Left colon (tissue), 2 donors: ENCODE measurements at regions of chr6 and their contacts with region 1.

Region 1: DNA sequence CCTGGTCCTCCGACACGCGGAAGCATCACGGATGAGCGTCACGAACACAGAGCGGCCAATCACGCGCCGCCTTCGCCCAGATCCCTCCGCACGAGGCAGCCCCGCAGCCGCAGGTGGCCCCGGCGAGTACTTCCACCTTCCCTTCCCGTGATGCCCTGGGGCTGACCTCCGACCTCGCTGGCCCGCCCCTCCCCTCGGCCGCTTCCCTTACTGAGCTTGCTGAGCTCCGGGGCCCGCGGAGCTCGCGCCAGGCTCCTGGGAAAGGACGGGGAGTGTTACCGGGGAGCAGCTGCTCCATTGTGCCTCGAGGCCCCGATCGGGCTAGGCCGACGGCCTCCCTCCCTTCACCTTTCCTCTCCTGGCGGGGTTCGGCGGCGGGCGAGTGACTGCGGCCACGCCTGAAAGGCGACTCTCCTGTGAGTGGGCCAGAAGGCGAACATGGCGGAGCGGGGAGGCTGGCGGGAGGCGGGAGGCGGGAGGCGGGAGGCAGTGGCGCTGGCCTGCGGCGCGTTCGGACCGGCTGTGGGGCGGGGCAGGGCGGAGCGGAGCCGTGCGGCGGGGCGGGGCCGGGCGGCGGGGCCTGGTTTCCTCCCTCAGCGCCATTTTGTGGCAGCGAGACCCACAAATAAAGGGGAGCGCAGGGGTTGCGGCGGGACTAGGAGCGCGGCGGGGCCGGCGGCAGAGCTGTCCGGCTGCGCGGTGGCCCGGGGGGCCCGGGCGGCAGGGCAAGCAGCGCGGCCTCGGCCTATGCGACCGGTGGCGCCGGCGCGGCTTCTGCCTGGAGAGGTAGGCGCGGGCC is at the start of gene WTAP:
- DNase-seq: peak; percentile 97 to 98
- ATAC-seq: peak; percentile 91
- total RNA-seq, gene WTAP: 73.4 to 79.3 TPM

Region 2: DNA sequence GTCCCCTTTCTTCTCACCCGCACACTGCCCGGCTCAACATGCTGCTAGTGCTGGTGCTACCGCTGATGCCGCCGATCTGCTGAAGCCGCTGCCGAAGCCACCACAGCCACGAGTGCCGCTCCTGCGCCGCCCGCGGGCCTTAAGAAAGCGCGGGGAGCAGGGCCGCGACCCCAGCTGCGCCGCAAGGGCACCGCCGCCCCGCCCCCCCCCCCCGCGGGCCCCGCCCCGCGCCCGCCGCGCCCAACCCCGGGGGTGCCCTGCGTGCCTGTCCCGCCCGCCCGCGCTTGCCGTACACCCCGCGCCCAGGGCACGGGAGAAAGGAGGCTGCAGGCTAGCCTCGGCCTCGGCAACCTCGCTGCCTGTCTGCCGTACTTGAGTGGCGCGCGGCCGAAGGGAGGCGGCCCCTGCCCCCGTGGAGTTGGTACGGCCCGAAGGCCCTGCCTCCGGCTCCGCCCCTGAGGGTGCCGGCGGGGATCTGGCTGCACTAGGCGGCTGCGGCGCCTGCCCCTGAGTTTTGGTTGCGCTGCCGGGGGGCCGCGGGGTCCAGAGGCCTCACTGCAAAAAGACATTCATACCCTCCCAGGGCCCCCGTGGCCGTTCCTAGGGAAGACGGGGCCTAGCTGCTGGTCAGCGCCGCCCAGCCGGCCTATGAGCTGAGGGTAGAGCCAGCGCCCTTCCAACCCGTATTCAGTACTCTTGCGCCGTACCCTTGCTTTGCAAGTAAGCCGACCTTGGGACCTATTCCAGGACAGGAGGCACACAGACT is 33.8 kb before region 1 on chr6 and contains the start of gene SOD2:
- intact Hi-C with region 1: loop called in 1 of 2 experiments (anchors 5 kb)
- DNase-seq: peak; percentile 87 to 90
- ATAC-seq: peak; percentile 78
- total RNA-seq, gene SOD2: 284 to 402 TPM

Region 3: DNA sequence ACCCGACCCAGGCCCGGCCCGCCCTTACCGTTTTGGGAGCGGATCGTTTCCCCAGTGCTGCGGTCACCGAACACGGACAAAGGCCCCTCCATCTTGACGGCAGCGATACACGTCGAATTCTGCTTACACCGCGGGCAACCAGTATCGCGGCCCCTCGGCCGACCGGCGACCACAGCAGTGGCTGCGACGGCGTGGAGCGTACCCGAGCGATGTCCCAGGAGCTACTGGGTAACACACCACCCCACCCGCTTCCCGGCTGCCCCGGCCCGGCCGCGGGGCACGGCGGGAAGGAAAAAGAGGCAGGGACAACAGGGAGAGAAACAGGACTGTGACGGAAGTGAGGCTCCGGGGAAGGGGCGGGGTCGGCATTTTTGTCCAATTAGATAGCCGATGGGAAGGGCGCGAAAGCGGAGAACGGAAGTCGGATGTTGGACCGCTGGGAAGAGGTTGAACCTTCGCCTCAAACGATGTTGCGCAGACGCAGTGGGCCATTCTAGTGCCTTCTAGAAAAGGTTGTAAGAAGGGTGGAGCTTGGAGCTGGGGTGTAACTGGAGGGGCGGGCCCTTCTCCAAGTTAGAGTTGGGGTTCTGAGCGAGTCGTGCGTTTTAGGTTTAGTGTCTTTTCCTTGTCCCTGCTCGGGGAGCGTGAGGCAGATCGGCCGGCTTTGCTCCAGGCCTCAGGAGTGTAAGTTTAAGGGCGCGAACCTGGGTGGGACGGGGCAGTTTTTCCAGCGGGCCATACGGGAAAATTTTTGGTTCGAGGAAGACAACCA is 62.4 kb after region 1 on chr6 and contains the start of gene TCP1:
- intact Hi-C with region 1: loop called in 1 of 2 experiments (anchors 10 kb)
- DNase-seq: peak; percentile 100
- ATAC-seq: peak; percentile 84
- total RNA-seq, gene TCP1: 165 to 172 TPM

Region 4: DNA sequence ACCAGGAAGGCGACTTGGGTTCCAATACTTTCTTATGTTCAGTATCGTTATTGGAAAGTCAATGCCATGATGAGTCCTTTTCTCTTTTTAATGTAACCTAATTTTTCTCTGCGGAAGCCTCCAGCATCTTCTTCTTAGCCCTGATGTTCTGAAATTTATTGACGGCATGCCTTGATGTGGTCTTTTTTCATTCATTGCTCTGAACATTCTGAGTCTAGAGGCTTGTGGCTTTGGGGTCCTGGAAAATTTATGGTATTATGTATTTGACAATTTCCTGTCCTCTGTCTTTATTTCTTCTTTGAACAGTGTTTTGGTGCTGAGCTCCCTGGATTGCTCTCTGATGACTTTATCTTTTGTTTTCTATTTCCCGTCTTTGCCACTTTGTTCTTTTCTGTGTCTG is 135.0 kb after region 1 on chr6:
- intact Hi-C with region 1: no loop called
- DNase-seq: no peak
- ATAC-seq: no peak

Region 5: DNA sequence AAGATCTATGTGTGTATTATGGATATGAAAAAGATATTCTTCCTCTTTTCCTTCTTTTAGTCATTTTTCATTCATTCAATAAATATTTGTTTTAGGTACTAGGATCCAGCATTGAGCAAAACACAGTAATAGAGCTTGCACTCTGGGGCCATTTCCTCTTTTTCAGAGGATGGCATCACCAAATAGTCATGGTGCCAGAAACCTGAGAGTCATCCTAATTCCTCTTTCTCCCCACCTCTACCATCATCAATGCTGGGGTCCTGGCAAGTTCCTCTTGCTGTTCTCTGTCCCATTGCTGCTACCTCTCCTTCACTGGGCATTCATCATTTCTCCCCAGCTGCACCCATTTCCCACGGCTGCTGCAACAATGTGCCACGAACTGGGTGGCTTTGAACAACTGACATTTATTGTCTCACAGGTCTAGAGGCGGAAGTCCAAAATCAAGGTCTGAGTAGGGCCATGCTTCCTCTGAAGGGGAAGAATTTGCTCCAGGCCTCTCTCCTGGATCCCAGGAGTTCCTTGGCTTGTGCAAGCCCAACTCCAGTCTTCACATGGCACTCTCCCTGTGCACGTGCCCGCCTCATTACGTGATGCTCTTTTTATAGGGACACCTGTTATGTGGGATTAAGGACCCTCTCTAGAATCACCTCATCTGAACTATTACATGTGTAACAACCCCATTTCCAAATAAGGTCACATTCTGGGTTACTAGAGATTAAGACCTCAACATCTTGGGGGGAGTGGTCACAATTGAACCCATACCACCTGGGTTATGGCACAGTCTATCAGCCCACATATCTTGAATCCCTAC is 232.3 kb after region 1 on chr6:
- intact Hi-C with region 1: no loop called
- DNase-seq: no peak
- ATAC-seq: no peak